ENCODE measurements at regions of chr20 and their contacts with region 1.

Region 1: DNA sequence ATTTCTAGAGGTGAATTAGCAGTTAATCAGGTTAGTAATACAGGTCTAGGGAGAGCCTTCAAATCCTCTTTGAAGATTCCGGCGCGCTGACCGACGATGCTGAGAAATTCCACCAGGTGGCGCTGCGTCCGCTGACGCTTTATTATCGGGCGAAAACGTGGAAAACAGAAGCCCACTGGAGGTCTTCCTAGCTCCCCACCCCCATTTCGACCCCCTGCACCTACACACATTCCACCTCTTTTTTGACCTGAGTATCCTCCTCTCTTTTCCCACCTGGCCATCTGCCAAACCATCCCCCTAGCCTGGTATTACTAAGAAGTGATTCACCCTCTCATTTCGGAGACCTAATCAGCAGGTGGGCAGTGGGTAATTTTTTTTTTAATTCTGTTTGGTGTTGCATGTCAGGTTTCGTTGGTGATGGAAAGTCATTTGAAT is 65.4 kb upstream of the RIN2 start:
- DNase-seq: peak; percentile 60 to 75
- ATAC-seq: peak in 2 of 4 donors; percentile 44 to 52
- H3K4me3 ChIP-seq: no peak overlapping the region
- H3K27ac ChIP-seq: no peak overlapping the region
- H3K4me1 ChIP-seq: peaks cover 39% of the 10 kb centered on the region
- H3K27me3 ChIP-seq: no peaks in the 10 kb centered on the region
- CTCF ChIP-seq: peak; percentile 96

Region 2: DNA sequence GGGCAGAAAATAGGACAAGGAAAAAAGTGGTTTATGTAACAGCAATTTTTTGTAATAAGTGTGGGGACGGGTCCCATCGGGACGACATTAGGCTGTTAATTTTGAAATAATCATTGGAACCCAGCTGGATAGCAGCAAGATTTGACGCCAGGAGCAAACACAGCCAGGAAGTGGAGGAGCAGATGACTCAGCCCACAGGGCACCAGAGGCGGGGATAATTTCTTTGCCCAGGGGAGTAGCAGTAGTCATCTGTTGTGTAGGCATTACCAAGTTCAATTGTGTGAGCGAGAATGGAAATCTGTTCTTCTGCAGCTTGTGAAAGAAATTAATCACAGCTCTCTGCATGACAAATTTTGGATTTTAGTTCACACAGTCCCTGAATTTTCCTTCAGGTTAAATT is 42.7 kb after region 1 on chr20:
- intact Hi-C with region 1: loop called in 1 of 2 experiments (anchors 5 kb)
- DNase-seq: peak; percentile 78 to 87
- ATAC-seq: peak; percentile 94 to 98 (median 96)
- H3K4me3 ChIP-seq: no peak overlapping the region
- H3K27ac ChIP-seq: peak overlapping the region; percentile 75
- H3K4me1 ChIP-seq: peaks cover 15% of the 10 kb centered on the region
- H3K27me3 ChIP-seq: no peaks in the 10 kb centered on the region
- CTCF ChIP-seq: no peak

Region 3: DNA sequence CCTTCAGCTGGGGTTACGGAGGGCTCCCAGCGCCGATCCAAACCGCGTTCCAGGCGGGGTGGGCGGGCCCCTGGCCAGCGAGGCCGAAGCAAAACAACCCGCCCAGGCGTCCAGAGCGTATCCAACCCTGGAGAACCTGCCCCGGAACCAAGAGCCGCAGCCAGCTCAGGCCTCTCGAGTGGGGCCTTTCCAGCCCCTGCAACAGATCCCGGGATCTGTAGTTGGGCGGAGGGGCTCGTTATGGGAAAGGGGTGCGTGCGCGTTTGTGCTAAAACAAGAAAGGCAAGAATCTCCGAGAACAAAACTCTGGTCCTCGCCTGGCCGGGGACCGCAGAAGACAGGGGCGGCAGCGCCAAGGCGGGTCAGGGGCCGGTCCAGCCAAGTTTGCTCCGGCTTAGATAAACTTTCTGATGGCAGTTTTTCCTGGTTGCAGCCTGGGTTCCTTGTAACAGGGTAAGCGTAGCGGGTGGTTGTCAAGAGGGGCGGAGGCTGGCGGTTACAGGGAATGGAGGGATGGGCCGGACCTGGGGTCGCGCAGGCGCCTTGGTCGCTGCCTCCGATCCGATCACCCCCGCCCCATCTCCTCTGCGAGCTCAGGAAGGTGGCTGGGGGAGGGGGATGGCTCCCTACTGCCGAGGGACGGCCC is 64.9 kb after region 1 on chr20:
- intact Hi-C with region 1: loop called in 1 of 2 experiments (anchors 5 kb)
- DNase-seq: peak; percentile 88 to 93
- ATAC-seq: peak; percentile 75 to 82 (median 80)
- H3K4me3 ChIP-seq: peak overlapping the region; percentile 95
- H3K27ac ChIP-seq: peak overlapping the region; percentile 96
- H3K4me1 ChIP-seq: peaks cover 28% of the 10 kb centered on the region
- H3K27me3 ChIP-seq: no peaks in the 10 kb centered on the region
- CTCF ChIP-seq: no peak

Region 4: DNA sequence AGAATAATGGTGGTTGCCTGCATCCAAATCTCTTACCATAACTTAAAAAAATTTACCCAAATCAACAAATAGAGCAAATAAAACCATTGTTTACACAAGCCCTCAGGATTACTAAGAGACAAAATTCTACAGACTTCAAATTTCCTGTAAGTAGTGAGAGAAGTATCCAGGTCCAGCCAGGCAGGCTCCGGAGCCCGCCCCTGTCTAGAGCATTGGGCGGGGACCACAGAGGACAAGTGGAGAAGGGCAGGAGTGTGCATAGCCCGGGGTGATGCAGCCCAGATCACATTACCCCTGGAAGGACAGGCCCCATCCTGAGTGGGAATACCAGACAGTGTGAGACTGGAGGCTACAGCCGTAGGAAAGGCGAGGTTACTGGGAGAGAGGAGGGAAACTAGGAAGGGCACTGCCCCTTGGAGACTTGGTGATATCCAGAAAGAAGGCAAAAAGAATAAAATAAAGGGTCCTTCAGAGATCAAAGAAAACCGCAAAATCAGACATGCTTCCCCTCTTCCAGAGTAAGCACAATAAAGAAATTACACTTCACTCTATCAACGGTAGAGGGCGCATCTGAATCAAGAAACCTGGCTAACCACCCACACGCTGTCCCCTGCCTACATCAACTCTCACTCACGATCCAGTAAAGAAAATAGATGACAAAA is 91.9 kb after region 1 on chr20:
- intact Hi-C with region 1: loop called (anchors 5 to 10 kb)
- DNase-seq: peak; percentile 44 to 67
- ATAC-seq: peak; percentile 84 to 91 (median 87)
- H3K4me3 ChIP-seq: peak overlapping the region; percentile 16
- H3K27ac ChIP-seq: peak overlapping the region; percentile 63
- H3K4me1 ChIP-seq: peaks cover 39% of the 10 kb centered on the region
- H3K27me3 ChIP-seq: no peaks in the 10 kb centered on the region
- CTCF ChIP-seq: peak; percentile 81

Region 5: DNA sequence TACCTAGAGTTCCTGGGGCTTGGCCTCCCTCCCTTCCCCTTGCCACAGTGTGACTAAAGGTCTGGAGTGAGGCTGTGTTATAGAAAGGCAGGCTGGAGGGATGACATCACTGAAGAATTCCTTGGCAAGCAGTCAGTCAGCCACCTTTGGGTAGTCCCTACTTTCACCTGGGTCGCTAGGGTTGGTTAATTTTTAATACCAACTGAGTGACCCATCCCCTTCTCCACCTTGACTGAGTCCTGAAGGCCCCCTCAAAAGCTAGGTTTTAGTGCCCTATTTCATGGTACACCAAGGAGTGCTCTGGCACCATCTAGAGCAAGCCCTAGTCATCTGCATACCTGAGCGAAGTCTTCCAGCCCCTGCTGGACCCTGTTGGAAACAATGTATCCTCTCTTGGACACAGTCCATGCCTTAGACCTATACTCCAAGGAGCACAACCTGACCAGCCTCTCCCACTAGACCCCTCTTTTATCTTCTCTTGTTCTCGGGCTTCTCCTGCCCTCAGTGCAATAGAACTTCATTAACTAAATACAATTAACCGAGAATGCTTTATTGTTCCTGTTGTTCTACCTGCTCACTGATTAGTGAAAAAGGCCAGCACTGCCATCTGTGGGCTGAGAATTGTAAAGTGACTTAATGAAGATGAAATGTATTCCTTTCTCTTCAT is 109.9 kb after region 1 on chr20:
- intact Hi-C with region 1: loop called in 1 of 2 experiments (anchors 5 kb)
- DNase-seq: no peak
- ATAC-seq: peak; percentile 44 to 48 (median 45)
- H3K4me3 ChIP-seq: no peak overlapping the region
- H3K27ac ChIP-seq: no peak overlapping the region
- H3K4me1 ChIP-seq: peaks cover 10% of the 10 kb centered on the region
- H3K27me3 ChIP-seq: no peaks in the 10 kb centered on the region
- CTCF ChIP-seq: peak; percentile 23

Region 6: DNA sequence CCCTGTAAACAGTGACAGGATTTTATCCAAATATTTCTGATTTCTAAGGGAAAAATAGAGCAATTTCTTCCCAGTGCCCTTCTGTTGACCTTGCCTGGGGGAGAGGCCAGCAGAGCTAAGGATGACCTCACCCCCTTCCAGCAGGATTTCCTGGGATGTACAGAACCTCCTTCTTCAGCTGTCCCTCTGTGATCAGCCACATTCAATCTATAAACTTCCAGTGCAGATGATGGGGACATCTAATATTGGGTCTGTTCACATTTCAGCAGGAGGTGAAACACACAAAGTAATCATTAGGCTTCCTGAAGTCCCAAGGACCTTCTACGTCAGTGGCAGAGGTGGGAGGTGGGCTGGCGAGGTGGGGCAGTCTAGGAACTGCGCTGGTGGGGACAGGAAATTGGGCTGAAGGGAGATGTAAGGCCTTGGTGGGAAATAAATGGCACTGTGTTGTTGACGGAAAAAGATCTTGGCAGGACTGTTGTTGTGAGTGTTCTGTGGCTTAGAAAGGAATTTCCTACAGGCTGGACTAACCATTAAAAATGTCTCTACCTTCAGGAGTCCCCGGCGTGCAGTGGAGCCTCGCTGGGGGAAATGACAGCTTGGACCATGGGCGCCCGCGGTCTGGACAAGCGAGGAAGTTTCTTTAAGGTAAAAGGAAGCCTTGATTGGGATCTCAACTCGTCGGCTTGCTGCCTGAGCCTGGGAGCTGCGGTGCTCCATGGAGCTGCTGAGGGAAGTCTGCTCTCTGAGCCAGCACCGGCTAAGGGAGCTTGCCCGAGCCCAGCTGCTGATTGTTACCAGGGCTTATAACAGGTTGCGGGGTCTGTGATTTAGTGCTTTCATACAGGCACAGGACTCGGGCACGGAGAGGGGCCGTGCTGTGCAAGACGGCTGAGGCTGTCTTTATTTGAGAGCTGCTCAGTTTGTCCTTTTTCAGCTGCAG is 196.6 kb after region 1 on chr20:
- intact Hi-C with region 1: loop called (anchors 5 to 10 kb)
- DNase-seq: peak; percentile 40 to 75
- ATAC-seq: peak; percentile 58 to 74 (median 68)
- H3K4me3 ChIP-seq: peak overlapping the region; percentile 55
- H3K27ac ChIP-seq: peak overlapping the region; percentile 86
- H3K4me1 ChIP-seq: peaks cover 64% of the 10 kb centered on the region
- H3K27me3 ChIP-seq: no peaks in the 10 kb centered on the region
- CTCF ChIP-seq: no peak

Region 7: DNA sequence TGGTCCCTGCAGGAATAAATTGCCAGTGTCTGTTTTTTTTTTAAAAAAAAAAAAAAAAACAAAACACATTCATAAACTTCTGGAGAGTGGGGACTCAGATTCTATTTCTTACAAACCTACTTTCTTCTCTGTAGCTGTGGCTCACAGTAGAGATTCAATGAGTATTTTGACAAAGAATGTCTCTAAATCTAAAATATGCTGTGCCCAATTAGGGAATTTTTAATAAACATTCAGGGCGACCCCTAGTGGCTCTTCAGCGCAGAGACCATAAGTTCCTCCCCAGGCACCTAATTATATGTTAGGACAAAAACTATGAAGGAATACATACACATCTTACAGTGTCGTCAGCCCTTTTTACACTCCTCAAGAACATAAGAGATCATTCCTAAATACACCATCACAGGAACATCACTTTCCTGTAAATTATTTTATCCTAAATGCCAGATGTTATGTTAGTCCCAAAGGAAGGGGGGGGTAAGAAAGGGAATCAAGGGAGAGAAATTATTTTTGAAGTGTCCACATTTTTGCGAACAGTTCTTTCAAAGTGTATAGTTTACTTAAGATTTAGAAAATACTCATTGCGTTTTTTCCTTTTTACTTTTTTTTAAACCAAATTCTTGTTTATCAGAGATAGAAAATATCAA is 302.6 kb after region 1 on chr20:
- intact Hi-C with region 1: loop called (anchors 5 kb)
- DNase-seq: no peak
- ATAC-seq: peak in 2 of 4 donors; percentile 30 to 53
- H3K4me3 ChIP-seq: no peak overlapping the region
- H3K27ac ChIP-seq: peak overlapping the region; percentile 83
- H3K4me1 ChIP-seq: peaks cover 75% of the 10 kb centered on the region
- H3K27me3 ChIP-seq: no peaks in the 10 kb centered on the region
- CTCF ChIP-seq: peak; percentile 79